BJ (cell line): ENCODE measurements at regions of chr5 and their contacts with region 1.

Region 1: GRCh38 chr5:151239237-151239861 is 13.6 kb upstream of the GM2A start:
- DNase-seq: no peak
- H3K4me3 ChIP-seq: no peak overlapping the region
- H3K27me3 ChIP-seq: peaks cover 7% of the 10 kb centered on the region
- CTCF ChIP-seq: peak; percentile 96

Region 2: GRCh38 chr5:151020304-151021110 is 218.8 kb before region 1 on chr5 and contains the start of gene GPX3:
- CTCF ChIA-PET with region 1: no interaction called
- POLR2A ChIA-PET with region 1: no interaction called
- DNase-seq: no peak
- H3K4me3 ChIP-seq: peak within 1 kb of the TSS; percentile 30
- H3K27me3 ChIP-seq: no peaks in the 10 kb centered on the region
- CTCF ChIP-seq: no peak
- polyA plus RNA-seq, gene GPX3: 2.8 and 3.8 TPM in 2 replicates

Region 3: GRCh38 chr5:151223469-151224264 is 15.7 kb before region 1 on chr5 and contains the start of gene CCDC69:
- CTCF ChIA-PET with region 1: interaction called, 11 read pairs
- POLR2A ChIA-PET with region 1: no interaction called
- DNase-seq: peak; percentile 4
- H3K4me3 ChIP-seq: peak within 1 kb of the TSS; percentile 61
- H3K27me3 ChIP-seq: no peaks in the 10 kb centered on the region
- CTCF ChIP-seq: peak; percentile 41
- polyA plus RNA-seq, gene CCDC69: 0.93 and 1.0 TPM in 2 replicates